Posterior vena cava (tissue), 2 donors: ENCODE measurements at regions of chr2 and their contacts with region 1.

Region 1: GRCh38 chr2:146351689-146352088 is 1493.1 kb upstream of the ACVR2A start:
- DNase-seq: no peak

Region 2: GRCh38 chr2:144350151-144350802 is 2001.4 kb before region 1 on chr2:
- intact Hi-C with region 1: no loop called
- DNase-seq: no peak

Region 3: GRCh38 chr2:146080925-146081324 is 270.8 kb before region 1 on chr2:
- intact Hi-C with region 1: loop called in 1 of 2 experiments (anchors 5 kb)
- DNase-seq: no peak